Activated CD4-positive, alpha-beta T cell treated with anti-CD3 and anti-CD28 coated beads for 36 hours (primary cell): ENCODE measurements at regions of chr10 and their contacts with region 1.

Region 1: GRCh38 chr10:123154092-123154921 is at the start of gene BUB3:
- DNase-seq: peak; percentile 97
- ATAC-seq: peak; percentile 90
- H3K4me3 Mint-ChIP-seq: peak within 1 kb of the TSS; percentile 100
- H3K27ac Mint-ChIP-seq: peak within 1 kb of the TSS; percentile 100
- H3K4me1 Mint-ChIP-seq: peaks cover 73% of the 10 kb centered on the region
- H3K27me3 Mint-ChIP-seq: peaks cover 8% of the 10 kb centered on the region
- total RNA-seq, gene BUB3: 230 to 242 TPM

Region 2: DNA sequence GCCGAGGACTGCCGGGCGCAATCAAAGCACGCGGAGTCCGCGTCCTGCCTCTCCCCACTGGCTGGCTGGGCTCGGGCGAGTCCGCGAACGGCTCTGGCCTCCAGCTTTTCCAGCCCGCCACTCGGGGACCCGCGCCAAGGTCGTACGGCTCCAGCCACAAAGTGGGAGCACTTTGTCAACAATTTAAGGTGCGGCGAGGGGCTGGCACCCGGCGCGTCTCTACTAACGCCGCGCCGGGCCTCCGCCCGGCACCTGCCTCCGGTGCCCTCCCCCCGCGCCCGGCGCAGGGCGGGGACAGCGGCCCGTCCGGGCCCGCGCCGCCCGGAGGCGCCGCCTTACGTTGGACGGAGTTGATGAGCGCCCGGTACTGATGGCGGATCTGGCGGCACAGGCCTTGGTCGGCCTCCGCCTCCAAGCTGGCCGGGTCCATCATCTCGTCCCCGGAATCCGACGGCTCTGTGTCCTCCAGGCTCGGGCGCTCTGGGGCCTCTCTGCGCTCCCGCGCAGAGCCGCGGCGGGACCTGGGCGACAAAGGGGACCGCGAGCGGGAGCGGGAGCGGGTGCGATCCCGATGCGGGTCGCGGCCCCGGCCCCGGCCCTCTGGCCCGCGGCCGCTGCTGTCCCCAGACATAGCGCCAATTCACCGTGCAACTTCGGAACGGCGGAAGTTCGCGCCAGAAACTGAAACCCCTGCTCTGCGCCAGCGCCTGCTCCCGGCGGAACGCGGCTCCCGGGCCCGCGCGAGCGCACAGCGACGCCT is 1179.6 kb before region 1 on chr10 and contains the start of gene NSMCE4A:
- CTCF ChIA-PET with region 1: no interaction called
- POLR2A ChIA-PET with region 1: no interaction called
- intact Hi-C with region 1: loop called in 1 of 2 experiments (anchors 10 kb)
- DNase-seq: peak; percentile 85
- ATAC-seq: peak; percentile 87
- H3K4me3 Mint-ChIP-seq: peak within 1 kb of the TSS; percentile 81
- H3K27ac Mint-ChIP-seq: peak within 1 kb of the TSS; percentile 42
- H3K4me1 Mint-ChIP-seq: peaks cover 19% of the 10 kb centered on the region
- H3K27me3 Mint-ChIP-seq: no peaks in the 10 kb centered on the region
- total RNA-seq, gene NSMCE4A: 56.3 to 56.4 TPM

Region 3: DNA sequence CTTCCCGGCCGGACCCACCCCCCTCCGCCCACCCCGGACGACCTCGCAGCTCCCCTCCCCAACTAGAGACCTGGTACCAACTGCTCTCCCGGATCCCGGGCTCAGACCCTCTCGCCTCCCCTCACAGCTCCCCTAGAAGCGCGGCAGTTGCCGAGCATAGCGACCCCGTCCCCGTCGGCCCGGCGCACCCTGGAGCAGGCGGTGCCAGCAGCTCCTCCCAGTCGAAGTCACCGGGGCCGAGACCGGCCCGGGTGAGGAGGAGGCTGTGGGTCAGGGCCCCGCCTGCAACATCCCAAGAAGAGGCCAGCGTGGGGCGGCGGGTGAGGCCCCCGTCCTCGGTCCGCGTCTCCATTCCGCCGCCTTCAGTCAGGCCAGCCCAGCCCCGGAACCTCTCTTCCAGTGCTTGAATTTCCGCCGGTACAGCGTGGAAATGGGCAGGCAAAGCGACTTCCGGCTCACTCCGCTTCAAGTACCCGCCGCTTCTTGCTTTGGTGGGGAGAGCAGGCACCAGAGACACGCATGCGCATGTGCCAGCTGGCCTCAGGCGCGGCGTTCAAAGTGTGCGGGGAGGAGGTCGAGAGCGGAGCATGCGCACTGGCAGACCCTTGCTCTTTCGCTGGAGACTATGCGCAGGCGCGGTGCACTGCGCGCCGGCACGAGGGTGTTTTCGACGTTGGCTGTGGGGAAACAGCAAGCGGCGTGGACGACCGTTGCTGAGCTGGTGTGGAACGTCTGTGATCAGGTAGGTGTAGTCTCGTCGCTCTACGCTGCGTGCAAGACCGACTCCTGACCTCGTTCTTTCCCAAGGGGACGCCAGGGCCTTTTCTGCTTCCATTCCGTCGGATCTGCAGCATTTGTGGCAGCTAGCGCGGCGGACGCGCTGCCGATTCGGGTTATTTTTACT is 200.2 kb before region 1 on chr10 and contains the start of gene C10orf88:
- CTCF ChIA-PET with region 1: no interaction called
- POLR2A ChIA-PET with region 1: no interaction called
- intact Hi-C with region 1: loop called (anchors 1 to 5 kb)
- DNase-seq: peak; percentile 98
- ATAC-seq: peak; percentile 98
- H3K4me3 Mint-ChIP-seq: peak within 1 kb of the TSS; percentile 77
- H3K27ac Mint-ChIP-seq: peak within 1 kb of the TSS; percentile 74
- H3K4me1 Mint-ChIP-seq: peaks cover 22% of the 10 kb centered on the region
- H3K27me3 Mint-ChIP-seq: no peaks in the 10 kb centered on the region
- total RNA-seq, gene C10orf88: 8.6 to 9.0 TPM

Region 4: GRCh38 chr10:123096452-123096851 is 57.9 kb before region 1 on chr10:
- CTCF ChIA-PET with region 1: no interaction called
- POLR2A ChIA-PET with region 1: no interaction called
- intact Hi-C with region 1: no loop called
- DNase-seq: no peak
- ATAC-seq: no peak
- H3K4me3 Mint-ChIP-seq: no peak overlapping the region
- H3K27ac Mint-ChIP-seq: no peak overlapping the region
- H3K4me1 Mint-ChIP-seq: no peaks in the 10 kb centered on the region
- H3K27me3 Mint-ChIP-seq: peaks cover 11% of the 10 kb centered on the region

Region 5: DNA sequence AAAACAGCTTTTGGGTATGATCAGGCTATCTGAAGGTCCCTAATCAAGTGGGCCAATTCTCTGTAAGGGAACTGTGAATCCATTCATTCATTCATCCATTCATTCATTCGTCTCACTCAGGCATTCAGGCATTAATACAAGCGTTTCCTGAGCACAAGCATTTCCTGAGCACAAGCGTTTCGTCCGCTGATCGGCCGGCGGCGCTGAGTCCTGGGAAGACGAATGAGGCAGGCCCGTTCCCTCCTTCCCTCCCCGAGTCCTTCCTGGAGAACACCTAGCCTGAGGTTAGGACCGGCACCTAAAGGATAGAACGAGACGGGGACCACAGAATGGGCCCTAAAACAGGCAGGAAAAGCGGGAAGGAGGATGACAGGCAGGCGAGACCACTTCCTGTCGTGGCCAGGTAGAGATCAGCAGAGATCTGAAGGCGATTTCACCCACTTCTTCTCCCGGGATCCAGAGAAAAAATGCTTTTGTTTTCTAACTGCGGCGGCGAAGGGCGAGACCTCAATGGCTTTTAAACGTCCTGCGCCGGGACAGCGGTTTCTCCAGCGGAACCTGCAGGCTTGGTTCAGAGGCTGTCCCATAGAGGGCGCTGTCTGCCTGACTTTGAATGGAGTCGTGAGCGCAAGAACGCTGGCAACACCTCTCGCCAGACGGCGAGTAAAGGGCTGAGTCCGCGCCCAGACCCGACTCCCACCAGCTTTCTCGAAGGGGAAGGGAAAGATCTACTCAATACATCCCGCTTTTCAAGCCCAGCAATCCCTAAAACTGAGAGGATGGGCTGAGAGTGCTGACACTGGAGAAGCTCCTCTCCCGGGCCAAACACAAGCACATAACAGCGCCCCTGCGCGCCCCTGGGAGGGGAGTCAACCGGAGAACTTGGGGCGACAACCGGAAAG is 21.5 kb before region 1 on chr10:
- CTCF ChIA-PET with region 1: interaction called, 11 read pairs
- POLR2A ChIA-PET with region 1: interaction called, 3 read pairs
- intact Hi-C with region 1: loop called in 1 of 2 experiments (anchors 2 kb)
- DNase-seq: peak; percentile 94
- ATAC-seq: peak; percentile 69
- H3K4me3 Mint-ChIP-seq: peak overlapping the region; percentile 59
- H3K27ac Mint-ChIP-seq: no peak overlapping the region
- H3K4me1 Mint-ChIP-seq: peaks cover 28% of the 10 kb centered on the region
- H3K27me3 Mint-ChIP-seq: peaks cover 61% of the 10 kb centered on the region

Region 6: GRCh38 chr10:123309731-123310130 is 155.4 kb after region 1 on chr10:
- CTCF ChIA-PET with region 1: no interaction called
- POLR2A ChIA-PET with region 1: no interaction called
- intact Hi-C with region 1: no loop called
- DNase-seq: no peak
- ATAC-seq: no peak
- H3K4me3 Mint-ChIP-seq: no peak overlapping the region
- H3K27ac Mint-ChIP-seq: no peak overlapping the region
- H3K4me1 Mint-ChIP-seq: no peaks in the 10 kb centered on the region
- H3K27me3 Mint-ChIP-seq: peaks cover 2% of the 10 kb centered on the region

Region 7: GRCh38 chr10:124418726-124419501 is 1264.6 kb after region 1 on chr10 and contains the start of gene OAT:
- CTCF ChIA-PET with region 1: no interaction called
- POLR2A ChIA-PET with region 1: no interaction called
- intact Hi-C with region 1: loop called in 1 of 2 experiments (anchors 2 kb)
- DNase-seq: peak; percentile 99
- ATAC-seq: peak; percentile 98
- H3K4me3 Mint-ChIP-seq: peak within 1 kb of the TSS; percentile 78
- H3K27ac Mint-ChIP-seq: peak within 1 kb of the TSS; percentile 21
- H3K4me1 Mint-ChIP-seq: peaks cover 16% of the 10 kb centered on the region
- H3K27me3 Mint-ChIP-seq: no peaks in the 10 kb centered on the region
- total RNA-seq, gene OAT: 36.5 to 39.6 TPM

Region 8: DNA sequence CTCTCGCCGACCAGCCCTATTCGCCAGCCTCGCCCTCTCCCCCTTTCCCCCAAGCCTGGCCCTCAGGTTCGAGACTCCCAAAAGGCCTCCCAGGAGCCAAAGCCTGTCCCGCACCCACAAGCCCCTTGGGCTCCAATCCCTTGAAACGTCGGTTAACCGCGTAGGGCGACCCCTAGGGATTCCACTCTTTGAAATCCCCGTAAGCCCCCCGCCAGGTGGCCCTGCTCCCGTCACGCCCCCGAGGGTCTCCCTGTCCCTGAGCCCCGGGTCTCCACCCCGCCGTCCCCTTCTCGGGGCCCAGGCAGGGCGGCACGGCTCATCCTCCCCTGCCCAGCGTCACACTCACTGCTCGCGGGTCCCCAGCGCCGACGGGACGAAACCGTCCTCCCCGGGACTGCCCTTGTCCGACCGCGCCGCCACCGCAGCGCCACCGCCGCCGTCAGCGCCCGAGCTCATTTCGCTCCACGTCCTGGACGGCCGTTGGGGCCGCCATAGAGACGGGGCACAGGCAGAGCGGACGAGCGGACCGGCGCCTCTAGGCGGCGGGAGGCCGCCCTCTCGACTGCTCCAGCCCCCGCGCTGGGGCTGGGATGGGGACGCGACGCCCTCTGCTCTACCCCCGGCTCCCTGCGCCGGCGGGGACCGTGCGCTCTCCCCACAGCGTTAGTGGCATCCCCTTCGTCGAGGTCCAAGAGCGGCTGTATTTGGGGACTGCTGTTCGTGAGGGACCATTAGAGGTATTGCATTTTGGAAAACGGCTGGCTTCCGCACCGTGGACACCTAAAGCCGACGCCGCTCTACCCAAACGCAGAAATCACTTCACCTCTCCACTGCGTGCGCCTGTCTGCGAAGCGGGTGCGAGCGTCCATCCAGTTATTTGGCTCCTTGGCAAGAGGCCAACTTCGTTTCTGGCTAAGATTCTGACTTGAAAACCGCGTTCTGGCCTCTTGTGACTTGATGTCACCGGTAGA is 1637.4 kb after region 1 on chr10 and contains the start of gene EEF1AKMT2:
- CTCF ChIA-PET with region 1: no interaction called
- POLR2A ChIA-PET with region 1: no interaction called
- intact Hi-C with region 1: loop called in 1 of 2 experiments (anchors 10 kb)
- DNase-seq: peak; percentile 91
- ATAC-seq: peak; percentile 93
- H3K4me3 Mint-ChIP-seq: peak within 1 kb of the TSS; percentile 98
- H3K27ac Mint-ChIP-seq: peak within 1 kb of the TSS; percentile 90
- H3K4me1 Mint-ChIP-seq: peaks cover 16% of the 10 kb centered on the region
- H3K27me3 Mint-ChIP-seq: no peaks in the 10 kb centered on the region
- total RNA-seq, gene EEF1AKMT2: 21.4 to 28.4 TPM